H1 (cell line): ENCODE measurements at regions of chr20 and their contacts with region 1.

Region 1: GRCh38 chr20:33653218-33653899 is 8.8 kb upstream of the C20orf144 start:
- DNase-seq: peak; percentile 69 to 86
- H3K4me3 ChIP-seq: no peak overlapping the region
- H3K27ac ChIP-seq: no peak overlapping the region
- H3K4me1 ChIP-seq: peaks cover 0 to 11% (median 1%) of the 10 kb centered on the region in 4 experiments; a peak in 4 of 7 replicates
- H3K27me3 ChIP-seq: no peaks in the 10 kb centered on the region
- CTCF ChIP-seq: peak; percentile 94 to 97 (median 96)
- EP300 ChIP-seq: no peak
- POLR2A ChIP-seq: peak in 1 of 2 experiments; percentile 67; a peak in 1 of 3 replicates
- RAD21 ChIP-seq: peak; percentile 95 to 97

Region 2: GRCh38 chr20:33465481-33466302 is 187.7 kb before region 1 on chr20:
- CTCF ChIA-PET with region 1: interaction called, 10 read pairs
- POLR2A ChIA-PET with region 1: interaction called, 4 read pairs
- DNase-seq: no peak
- H3K4me3 ChIP-seq: no peak overlapping the region
- H3K27ac ChIP-seq: no peak overlapping the region
- H3K4me1 ChIP-seq: peaks cover 0 to 3% (median 0%) of the 10 kb centered on the region in 4 experiments; a peak in 1 of 7 replicates
- H3K27me3 ChIP-seq: no peaks in the 10 kb centered on the region
- CTCF ChIP-seq: no peak
- EP300 ChIP-seq: no peak
- POLR2A ChIP-seq: no peak
- RAD21 ChIP-seq: no peak

Region 3: GRCh38 chr20:33515569-33516216 is 137.7 kb before region 1 on chr20:
- CTCF ChIA-PET with region 1: interaction called, 16 read pairs
- POLR2A ChIA-PET with region 1: no interaction called
- DNase-seq: no peak
- H3K4me3 ChIP-seq: no peak overlapping the region
- H3K27ac ChIP-seq: no peak overlapping the region
- H3K4me1 ChIP-seq: 0 out of 7 replicates have a peak, but pooled peaks cover 0 to 2% (median 0%) of the 10 kb centered on the region in 4 experiments
- H3K27me3 ChIP-seq: no peaks in the 10 kb centered on the region
- CTCF ChIP-seq: peak in 1 of 3 experiments; percentile 13; a peak in 1 of 4 replicates
- EP300 ChIP-seq: no peak
- POLR2A ChIP-seq: no peak
- RAD21 ChIP-seq: peak in 1 of 2 experiments; percentile 40; a peak in 1 of 4 replicates